ENCODE measurements at regions of chr19 and their contacts with region 1.

Region 1: DNA sequence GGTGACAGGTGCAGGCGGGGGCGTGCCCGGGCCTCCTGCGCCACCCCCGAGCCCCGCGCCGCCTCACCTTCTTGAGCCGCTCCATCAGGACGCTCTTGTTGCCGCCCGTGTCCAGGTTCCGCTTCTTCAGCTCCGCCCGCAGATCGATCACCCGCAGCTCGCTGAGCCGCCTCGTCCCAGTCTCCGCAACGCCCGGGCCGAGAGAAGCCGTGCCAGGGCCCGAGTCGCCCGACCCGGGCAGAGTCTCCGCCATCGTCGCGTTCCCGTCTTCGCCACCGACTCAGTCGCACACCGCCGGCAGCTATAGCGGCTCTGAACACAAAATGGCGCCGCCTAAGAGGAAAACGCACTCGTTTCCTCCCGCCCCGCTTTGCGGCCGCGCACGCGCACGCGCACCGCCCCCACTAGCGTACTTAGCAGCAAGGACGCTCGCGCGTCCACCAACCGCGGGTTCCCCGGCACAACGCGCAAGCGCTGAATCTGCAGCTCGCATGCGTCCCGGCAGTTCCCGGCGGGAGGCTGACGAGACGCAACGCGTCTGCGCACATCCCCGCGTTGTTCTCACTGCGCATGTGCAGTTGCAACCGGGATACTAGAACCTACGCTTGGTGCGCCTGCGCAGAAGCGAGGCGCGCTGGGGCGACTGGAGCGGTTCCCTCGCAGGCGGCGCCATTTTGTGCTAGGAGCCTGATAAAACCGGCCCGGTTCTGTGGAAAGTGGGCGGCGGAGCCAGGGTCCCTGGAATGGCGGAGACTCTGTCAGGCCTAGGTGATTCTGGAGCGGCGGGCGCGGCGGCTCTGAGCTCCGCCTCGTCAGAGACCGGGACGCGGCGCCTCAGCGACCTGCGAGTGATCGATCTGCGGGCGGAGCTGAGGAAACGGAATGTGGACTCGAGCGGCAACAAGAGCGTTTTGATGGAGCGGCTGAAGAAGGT is at the starts of genes SAFB and SAFB2:
- DNase-seq: peak; percentile 99
- CTCF ChIP-seq: no peak

Region 2: DNA sequence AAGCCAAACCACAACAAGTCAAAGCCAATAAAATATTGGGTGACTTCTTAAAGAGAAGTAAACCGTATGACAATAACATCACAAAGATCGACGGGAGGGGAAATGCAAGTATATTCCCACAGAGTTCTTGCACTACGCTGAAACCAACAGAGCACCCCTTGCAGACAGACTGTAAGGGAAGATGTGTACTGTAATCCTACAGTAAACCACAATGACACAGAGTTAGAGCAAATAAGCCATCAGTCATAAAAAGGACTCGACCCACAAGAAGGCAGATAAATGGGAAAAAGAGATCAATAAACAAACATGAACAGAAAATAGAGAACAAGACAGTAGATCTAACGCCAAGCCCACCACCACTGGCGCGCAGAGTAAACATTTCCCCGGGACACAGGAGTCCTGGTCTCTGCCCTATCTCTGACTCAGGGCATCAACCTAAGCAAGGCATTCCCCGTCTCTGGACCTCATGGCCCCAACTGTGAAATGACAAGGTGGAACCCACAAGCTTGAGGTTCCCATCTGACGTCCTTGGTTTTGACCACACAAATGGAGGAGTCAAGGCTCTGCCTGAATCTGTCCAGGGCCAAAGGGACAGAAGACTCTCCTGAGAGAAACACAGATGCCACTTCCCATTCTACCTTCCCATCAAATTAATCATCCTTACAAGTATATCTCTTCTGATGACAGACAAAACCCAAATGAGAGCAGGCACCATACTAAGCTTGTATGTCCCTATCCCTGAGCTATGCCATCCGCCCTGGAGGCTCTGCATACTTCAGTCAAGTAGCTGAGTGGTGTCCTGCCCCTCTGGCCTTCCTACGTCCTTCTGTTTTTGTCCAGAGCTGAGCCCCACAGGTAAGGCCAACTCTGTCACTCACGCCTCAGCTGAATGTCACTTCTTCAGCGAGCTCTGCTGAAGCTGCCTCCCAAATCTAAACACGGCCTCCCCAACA is 15.1 kb before region 1 on chr19:
- CTCF ChIA-PET with region 1: interaction called, 13 read pairs
- POLR2A ChIA-PET with region 1: interaction called, 7 read pairs
- DNase-seq: no peak
- CTCF ChIP-seq: no peak

Region 3: GRCh38 chr19:5753743-5754142 is 131.0 kb after region 1 on chr19:
- CTCF ChIA-PET with region 1: no interaction called
- POLR2A ChIA-PET with region 1: no interaction called
- DNase-seq: no peak
- CTCF ChIP-seq: no peak

Measured in GM10248 (cell line).